ENCODE measurements at regions of chr10 and their contacts with region 1.

Region 1: DNA sequence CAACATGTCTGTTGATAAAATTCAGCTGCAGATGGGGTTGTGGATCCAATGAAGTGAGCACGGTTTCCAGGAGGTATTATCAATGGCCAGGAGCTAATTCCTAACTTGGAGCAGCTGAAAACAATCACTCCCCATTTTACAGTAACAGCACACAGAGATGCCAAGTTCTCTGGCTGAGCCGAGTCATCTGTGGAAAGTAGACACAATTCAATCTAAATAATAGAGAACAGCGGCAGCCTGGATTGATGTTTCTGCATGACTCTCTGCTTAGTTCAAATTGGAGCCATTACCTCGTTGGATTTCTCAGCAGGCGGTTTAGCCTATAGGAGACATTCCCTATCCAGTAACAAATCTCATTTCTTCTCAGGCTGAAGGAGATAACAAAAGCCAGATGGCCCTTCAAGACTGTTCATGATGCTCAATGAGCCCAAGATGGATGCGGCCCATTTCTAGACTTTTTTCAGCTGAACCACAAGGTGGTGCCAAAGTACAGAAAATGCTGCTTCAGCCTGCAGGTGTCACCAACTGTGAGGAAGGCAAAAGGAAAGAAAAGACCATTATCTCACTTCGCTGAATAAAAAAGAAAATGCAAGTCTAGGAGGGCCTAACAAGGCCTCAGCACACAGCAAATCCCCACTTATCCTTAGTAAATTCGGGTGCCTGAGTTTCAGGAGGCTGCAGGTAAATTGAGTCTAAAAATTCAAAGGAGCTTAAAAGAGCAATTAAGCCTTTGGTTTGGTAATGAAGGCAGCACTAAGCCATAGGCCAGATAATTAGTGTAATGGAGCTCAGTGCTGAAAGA is 83.7 kb downstream of the SLC16A9 start:
- DNase-seq: peak; percentile 73
- H3K4me3 ChIP-seq: no peak overlapping the region
- H3K27ac ChIP-seq: no peak overlapping the region
- H3K4me1 ChIP-seq: no peaks in the 10 kb centered on the region
- CTCF ChIP-seq: peak; percentile 94

Region 2: GRCh38 chr10:58781873-58782488 is 843.9 kb before region 1 on chr10:
- CTCF ChIA-PET with region 1: no interaction called
- POLR2A ChIA-PET with region 1: no interaction called
- intact Hi-C with region 1: loop called (anchors 1 kb)
- DNase-seq: peak; percentile 29
- H3K4me3 ChIP-seq: no peak overlapping the region
- H3K27ac ChIP-seq: no peak overlapping the region
- H3K4me1 ChIP-seq: no peaks in the 10 kb centered on the region
- CTCF ChIP-seq: peak; percentile 82

Region 3: DNA sequence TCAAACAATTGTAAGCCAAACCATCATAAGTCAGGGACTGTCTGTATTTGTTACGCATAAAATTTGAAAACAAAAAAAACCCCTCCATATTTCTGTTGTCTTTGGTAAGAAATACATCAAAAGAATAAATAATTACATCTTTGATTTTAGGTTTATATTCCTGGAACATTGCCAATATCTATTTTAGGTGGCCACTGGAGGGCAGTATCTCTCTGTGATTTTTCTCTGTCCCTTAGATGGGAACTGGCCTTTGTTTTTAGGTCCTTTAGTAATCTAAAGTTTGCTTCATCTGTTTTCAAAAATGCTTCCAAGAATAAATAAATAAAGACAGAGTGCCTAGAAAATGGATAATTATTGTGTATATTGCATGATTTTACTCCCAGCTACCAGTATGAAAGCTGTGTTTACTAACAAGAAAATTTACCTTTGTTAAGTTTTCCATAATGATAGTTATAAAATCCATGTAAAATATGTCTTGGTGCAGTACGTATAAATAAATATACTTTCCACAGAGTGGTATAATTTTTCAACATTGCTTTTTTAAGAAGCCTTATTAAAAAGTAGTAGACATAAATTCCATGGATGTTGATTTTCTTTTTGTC is 385.2 kb before region 1 on chr10:
- CTCF ChIA-PET with region 1: no interaction called
- POLR2A ChIA-PET with region 1: no interaction called
- intact Hi-C with region 1: loop called (anchors 2 kb)
- DNase-seq: peak; percentile 16
- H3K4me3 ChIP-seq: no peak overlapping the region
- H3K27ac ChIP-seq: no peak overlapping the region
- H3K4me1 ChIP-seq: no peaks in the 10 kb centered on the region
- CTCF ChIP-seq: peak; percentile 84

Region 4: GRCh38 chr10:59611043-59611442 is 14.9 kb before region 1 on chr10:
- CTCF ChIA-PET with region 1: no interaction called
- POLR2A ChIA-PET with region 1: no interaction called
- intact Hi-C with region 1: no loop called
- DNase-seq: no peak
- H3K4me3 ChIP-seq: no peak overlapping the region
- H3K27ac ChIP-seq: no peak overlapping the region
- H3K4me1 ChIP-seq: no peaks in the 10 kb centered on the region
- CTCF ChIP-seq: no peak

Region 5: DNA sequence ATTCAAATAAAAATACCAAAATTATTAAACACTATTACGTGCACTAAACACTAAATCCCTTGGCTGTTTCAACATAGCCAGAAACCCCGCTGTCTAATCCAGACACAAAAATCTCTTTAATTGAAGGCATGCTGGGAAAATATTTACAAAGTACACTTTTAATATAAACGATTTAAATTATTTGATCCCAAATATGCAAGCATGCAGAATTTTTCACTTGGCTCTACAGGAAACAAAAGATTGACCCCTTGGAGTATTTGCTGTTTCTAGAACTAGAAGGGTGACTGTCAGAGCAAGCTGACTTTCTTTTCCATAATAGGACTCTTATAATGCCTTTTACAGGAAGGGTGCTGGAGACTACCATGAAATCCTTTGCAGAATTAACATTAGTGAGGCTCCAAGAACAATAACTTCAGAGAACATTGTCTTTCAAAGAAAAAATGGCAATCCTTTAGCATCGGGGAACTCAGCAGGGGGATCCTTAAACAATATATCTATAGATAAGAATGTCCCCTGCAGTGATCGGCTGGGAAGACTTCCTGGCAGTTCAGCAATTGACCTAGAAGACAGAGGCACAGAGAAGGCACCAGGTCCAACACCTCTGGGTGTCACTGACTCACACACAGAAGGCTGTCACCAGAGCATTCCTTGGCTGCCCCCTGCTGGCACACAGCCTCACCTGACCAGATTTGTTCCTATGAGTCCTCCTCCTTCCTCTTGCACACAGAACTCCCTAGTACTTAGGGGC is 183.1 kb after region 1 on chr10:
- CTCF ChIA-PET with region 1: no interaction called
- POLR2A ChIA-PET with region 1: no interaction called
- intact Hi-C with region 1: loop called (anchors 2 kb)
- DNase-seq: peak; percentile 54
- H3K4me3 ChIP-seq: no peak overlapping the region
- H3K27ac ChIP-seq: no peak overlapping the region
- H3K4me1 ChIP-seq: no peaks in the 10 kb centered on the region
- CTCF ChIP-seq: peak; percentile 79

Region 6: DNA sequence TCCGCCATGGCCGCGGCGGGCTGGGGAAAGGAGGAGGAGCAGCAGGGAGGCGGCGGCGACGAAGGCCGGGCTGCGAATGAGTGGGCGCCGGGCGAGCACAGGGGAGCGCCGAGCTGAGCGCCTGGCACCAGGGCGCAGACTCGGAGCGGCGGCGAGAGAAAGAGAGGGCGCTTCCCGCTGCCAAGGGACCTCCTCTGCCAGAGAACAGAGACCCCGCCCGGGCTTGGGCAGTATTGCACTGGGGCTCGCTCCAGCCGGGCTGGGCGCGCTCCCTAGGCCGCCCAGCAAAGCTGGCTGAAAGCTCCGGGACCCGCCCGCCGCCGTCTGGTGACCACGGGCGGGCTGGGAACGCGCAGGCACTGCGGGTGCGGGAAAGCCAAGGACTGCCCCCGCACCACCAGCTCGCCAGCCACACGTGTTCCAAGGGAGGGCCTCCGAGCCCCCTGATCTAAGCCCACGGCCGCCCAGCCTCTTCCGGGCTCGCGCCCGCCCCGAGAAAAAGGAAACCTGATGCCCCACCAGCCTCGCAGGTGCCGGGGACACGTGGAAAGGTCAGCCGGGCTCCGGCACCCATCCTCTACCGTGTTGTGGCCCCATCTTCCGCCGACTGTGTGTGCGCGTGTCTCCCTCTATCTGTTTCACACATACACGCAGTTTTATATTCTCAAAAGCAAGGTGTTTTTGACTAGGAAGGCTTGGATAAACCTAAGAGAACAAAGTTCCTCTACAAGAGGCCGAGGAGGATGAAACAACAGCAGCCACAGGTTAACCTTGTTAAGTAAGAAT is 280.7 kb after region 1 on chr10 and contains the start of gene CCDC6:
- CTCF ChIA-PET with region 1: no interaction called
- POLR2A ChIA-PET with region 1: no interaction called
- intact Hi-C with region 1: loop called (anchors 1 kb)
- DNase-seq: peak; percentile 92
- H3K4me3 ChIP-seq: peak within 1 kb of the TSS; percentile 100
- H3K27ac ChIP-seq: peak within 1 kb of the TSS; percentile 77
- H3K4me1 ChIP-seq: peaks cover 39% of the 10 kb centered on the region
- CTCF ChIP-seq: peak; percentile 69
- total RNA-seq, gene CCDC6: 9.5 and 10.9 TPM in 2 replicates

Region 7: GRCh38 chr10:60099998-60100747 is 474.3 kb after region 1 on chr10:
- CTCF ChIA-PET with region 1: no interaction called
- POLR2A ChIA-PET with region 1: no interaction called
- intact Hi-C with region 1: loop called (anchors 2 kb)
- DNase-seq: peak; percentile 58
- H3K4me3 ChIP-seq: no peak overlapping the region
- H3K27ac ChIP-seq: no peak overlapping the region
- H3K4me1 ChIP-seq: no peaks in the 10 kb centered on the region
- CTCF ChIP-seq: peak; percentile 85

Region 8: DNA sequence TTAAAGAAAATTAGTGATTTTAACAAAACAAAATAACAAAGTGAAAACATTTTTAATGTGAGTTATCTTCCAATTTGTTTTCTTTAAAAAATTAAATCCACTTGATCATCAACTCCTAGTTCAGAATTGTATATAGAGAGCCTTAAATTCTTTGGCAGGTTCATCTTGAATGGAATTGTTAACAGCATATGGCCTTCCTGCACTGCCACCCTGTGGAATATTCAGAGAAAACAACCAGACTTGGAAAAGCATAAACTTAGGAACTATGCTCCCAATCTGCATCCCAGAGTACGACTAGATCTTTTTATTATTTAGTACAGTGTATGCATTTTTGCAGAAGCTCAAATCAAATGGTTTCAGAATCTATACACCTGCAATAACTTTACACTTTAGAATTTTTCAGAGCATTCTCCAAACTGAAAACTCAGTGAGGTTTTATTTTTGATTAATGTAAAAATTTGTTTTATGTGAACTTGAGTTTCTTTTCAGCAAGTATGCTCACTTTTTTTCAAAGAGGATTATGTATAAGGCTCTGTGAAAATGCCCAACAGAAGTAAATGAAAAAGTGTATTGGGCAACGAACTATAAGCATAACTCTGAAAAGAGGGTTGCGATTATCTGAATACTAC is 808.6 kb after region 1 on chr10:
- CTCF ChIA-PET with region 1: no interaction called
- POLR2A ChIA-PET with region 1: no interaction called
- intact Hi-C with region 1: loop called (anchors 10 kb)
- DNase-seq: peak; percentile 49
- H3K4me3 ChIP-seq: no peak overlapping the region
- H3K27ac ChIP-seq: no peak overlapping the region
- H3K4me1 ChIP-seq: no peaks in the 10 kb centered on the region
- CTCF ChIP-seq: peak; percentile 90

Measured in OCI-LY7 (cell line).